Activated CD4-positive, alpha-beta T cell treated with anti-CD3 and anti-CD28 coated beads, Interleukin-2, amount 10 ng/mL, durations not matched to agents 7 days and 5 days (primary cell): ENCODE measurements at regions of chr9 and their contacts with region 1.

Region 1: GRCh38 chr9:6471231-6471850 is 58.3 kb downstream of the UHRF2 start:
- DNase-seq: no peak
- H3K4me3 Mint-ChIP-seq: no peak overlapping the region
- H3K27ac Mint-ChIP-seq: no peak overlapping the region
- H3K4me1 Mint-ChIP-seq: peaks cover 1% of the 10 kb centered on the region
- H3K27me3 Mint-ChIP-seq: no peaks in the 10 kb centered on the region

Region 2: GRCh38 chr9:6153425-6153824 is 317.9 kb before region 1 on chr9:
- CTCF ChIA-PET with region 1: no interaction called
- POLR2A ChIA-PET with region 1: no interaction called
- DNase-seq: no peak
- H3K4me3 Mint-ChIP-seq: no peak overlapping the region
- H3K27ac Mint-ChIP-seq: no peak overlapping the region
- H3K4me1 Mint-ChIP-seq: no peaks in the 10 kb centered on the region
- H3K27me3 Mint-ChIP-seq: peaks cover 29% of the 10 kb centered on the region

Region 3: DNA sequence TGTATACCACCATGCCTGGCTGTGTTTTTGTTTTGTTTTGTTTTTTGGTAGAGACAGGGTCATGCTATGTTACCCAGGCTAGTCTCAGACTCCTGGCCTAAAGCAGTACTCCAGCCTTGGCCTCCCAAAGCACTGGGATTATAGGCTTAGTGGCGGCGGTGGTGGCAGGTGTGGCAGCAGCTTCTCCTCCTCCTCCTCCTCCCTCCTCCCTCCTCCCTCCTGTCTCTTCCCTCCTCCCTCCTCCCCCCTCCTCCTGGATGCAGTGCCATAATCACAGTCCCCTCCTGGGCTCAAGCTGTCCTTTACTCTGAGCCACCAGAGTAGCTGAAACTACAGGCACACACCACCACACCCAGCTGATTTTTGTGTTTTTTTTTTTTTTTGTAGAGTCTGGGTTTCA is 12.9 kb after region 1 on chr9:
- CTCF ChIA-PET with region 1: interaction called, 10 read pairs
- POLR2A ChIA-PET with region 1: no interaction called
- DNase-seq: no peak
- H3K4me3 Mint-ChIP-seq: no peak overlapping the region
- H3K27ac Mint-ChIP-seq: no peak overlapping the region
- H3K4me1 Mint-ChIP-seq: no peaks in the 10 kb centered on the region
- H3K27me3 Mint-ChIP-seq: no peaks in the 10 kb centered on the region

Region 4: DNA sequence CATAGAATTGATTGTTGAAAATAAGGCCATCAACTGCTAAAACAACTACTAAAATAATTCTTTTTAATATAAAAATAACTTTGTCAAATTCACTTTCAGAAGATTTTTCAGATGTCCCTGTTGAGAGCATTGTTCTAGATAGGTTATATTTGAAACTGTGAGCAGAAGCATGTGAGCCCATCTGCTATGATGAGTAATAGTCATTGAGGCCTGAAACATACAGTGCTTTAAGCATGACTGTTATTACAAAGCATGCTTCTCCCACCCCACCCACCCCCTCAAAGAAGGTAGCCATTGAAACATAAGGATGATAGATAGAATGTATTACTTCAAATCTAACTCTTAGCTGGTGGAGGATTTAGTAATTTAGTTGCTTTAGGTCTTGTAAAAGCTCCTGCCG is 27.6 kb after region 1 on chr9:
- CTCF ChIA-PET with region 1: no interaction called
- POLR2A ChIA-PET with region 1: no interaction called
- DNase-seq: no peak
- H3K4me3 Mint-ChIP-seq: no peak overlapping the region
- H3K27ac Mint-ChIP-seq: no peak overlapping the region
- H3K4me1 Mint-ChIP-seq: peaks cover 1% of the 10 kb centered on the region
- H3K27me3 Mint-ChIP-seq: no peaks in the 10 kb centered on the region

Region 5: GRCh38 chr9:6575324-6576034 is 104.1 kb after region 1 on chr9:
- CTCF ChIA-PET with region 1: no interaction called
- POLR2A ChIA-PET with region 1: no interaction called
- DNase-seq: no peak
- H3K4me3 Mint-ChIP-seq: no peak overlapping the region
- H3K27ac Mint-ChIP-seq: no peak overlapping the region
- H3K4me1 Mint-ChIP-seq: no peaks in the 10 kb centered on the region
- H3K27me3 Mint-ChIP-seq: peaks cover 7% of the 10 kb centered on the region

Region 6: GRCh38 chr9:6632516-6633183 is 161.3 kb after region 1 on chr9:
- CTCF ChIA-PET with region 1: no interaction called
- POLR2A ChIA-PET with region 1: no interaction called
- DNase-seq: no peak
- H3K4me3 Mint-ChIP-seq: no peak overlapping the region
- H3K27ac Mint-ChIP-seq: no peak overlapping the region
- H3K4me1 Mint-ChIP-seq: peaks cover 11% of the 10 kb centered on the region
- H3K27me3 Mint-ChIP-seq: peaks cover 13% of the 10 kb centered on the region